ENCODE measurements at regions of chr10 and their contacts with region 1.

Region 1: GRCh38 chr10:97736902-97737769 is at the start of gene ZFYVE27:
- DNase-seq: peak; percentile 98
- H3K4me3 Mint-ChIP-seq: peak within 1 kb of the TSS; percentile 92
- H3K27ac Mint-ChIP-seq: peak within 1 kb of the TSS; percentile 93
- H3K4me1 Mint-ChIP-seq: peaks cover 44% of the 10 kb centered on the region
- H3K27me3 Mint-ChIP-seq: no peaks in the 10 kb centered on the region
- total RNA-seq, gene ZFYVE27: 18.0 to 18.4 TPM

Region 2: GRCh38 chr10:97400665-97401454 is 336.3 kb before region 1 on chr10 and contains the start of gene RRP12:
- CTCF ChIA-PET with region 1: no interaction called
- intact Hi-C with region 1: loop called (anchors 2 kb)
- DNase-seq: peak; percentile 92
- H3K4me3 Mint-ChIP-seq: peak within 1 kb of the TSS; percentile 92
- H3K27ac Mint-ChIP-seq: peak within 1 kb of the TSS; percentile 83
- H3K4me1 Mint-ChIP-seq: peaks cover 15% of the 10 kb centered on the region
- H3K27me3 Mint-ChIP-seq: no peaks in the 10 kb centered on the region
- total RNA-seq, gene RRP12: 51.0 to 55.2 TPM

Region 3: GRCh38 chr10:97632949-97633884 is 103.9 kb before region 1 on chr10 and contains the start of gene MORN4:
- CTCF ChIA-PET with region 1: no interaction called
- intact Hi-C with region 1: loop called (anchors 2 kb)
- DNase-seq: peak; percentile 95
- H3K4me3 Mint-ChIP-seq: peak within 1 kb of the TSS; percentile 99
- H3K27ac Mint-ChIP-seq: peak within 1 kb of the TSS; percentile 80
- H3K4me1 Mint-ChIP-seq: peaks cover 14% of the 10 kb centered on the region
- H3K27me3 Mint-ChIP-seq: no peaks in the 10 kb centered on the region
- total RNA-seq, gene MORN4: 10.7 TPM

Region 4: DNA sequence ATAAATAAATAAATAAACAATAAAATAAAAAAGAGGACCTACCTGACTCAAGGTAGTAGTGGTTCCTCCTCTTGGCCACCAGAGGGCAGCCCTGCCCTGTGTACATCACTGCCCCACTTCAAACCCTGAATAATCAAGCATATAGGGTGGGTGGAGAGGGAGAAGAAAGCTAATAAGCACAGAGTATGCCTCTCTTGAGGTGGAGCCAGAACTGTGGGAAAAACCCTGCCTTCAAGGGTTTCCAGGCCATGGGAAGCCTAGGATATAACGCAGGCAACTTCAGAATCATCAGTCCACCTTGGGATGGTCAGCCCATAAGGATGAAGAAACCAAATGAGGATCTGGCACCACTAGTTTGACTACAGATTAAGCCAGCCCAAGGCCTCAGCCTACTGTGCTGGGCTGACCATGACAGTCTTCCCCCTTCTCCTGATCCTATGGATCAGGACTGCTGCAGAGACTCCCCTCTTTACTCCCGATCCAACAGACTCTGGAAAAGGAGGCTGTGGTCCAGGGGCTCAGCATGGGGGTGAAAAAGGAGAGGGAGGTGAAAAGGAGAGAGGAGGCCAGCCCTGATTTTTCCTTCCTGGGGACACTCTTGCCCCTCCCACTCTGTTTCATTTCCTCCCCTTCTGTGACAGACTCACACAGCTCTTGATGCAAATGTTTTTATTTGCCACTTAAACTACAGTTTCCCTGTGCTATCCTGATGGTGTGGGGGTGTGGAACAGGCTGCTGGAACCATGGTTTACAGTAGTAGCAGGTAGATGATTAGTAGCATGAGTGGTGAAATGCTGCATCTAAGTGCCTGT is 60.2 kb before region 1 on chr10:
- CTCF ChIA-PET with region 1: interaction called, 36 read pairs
- intact Hi-C with region 1: no loop called
- DNase-seq: peak; percentile 48
- H3K4me3 Mint-ChIP-seq: no peak overlapping the region
- H3K27ac Mint-ChIP-seq: no peak overlapping the region
- H3K4me1 Mint-ChIP-seq: no peaks in the 10 kb centered on the region
- H3K27me3 Mint-ChIP-seq: no peaks in the 10 kb centered on the region

Region 5: DNA sequence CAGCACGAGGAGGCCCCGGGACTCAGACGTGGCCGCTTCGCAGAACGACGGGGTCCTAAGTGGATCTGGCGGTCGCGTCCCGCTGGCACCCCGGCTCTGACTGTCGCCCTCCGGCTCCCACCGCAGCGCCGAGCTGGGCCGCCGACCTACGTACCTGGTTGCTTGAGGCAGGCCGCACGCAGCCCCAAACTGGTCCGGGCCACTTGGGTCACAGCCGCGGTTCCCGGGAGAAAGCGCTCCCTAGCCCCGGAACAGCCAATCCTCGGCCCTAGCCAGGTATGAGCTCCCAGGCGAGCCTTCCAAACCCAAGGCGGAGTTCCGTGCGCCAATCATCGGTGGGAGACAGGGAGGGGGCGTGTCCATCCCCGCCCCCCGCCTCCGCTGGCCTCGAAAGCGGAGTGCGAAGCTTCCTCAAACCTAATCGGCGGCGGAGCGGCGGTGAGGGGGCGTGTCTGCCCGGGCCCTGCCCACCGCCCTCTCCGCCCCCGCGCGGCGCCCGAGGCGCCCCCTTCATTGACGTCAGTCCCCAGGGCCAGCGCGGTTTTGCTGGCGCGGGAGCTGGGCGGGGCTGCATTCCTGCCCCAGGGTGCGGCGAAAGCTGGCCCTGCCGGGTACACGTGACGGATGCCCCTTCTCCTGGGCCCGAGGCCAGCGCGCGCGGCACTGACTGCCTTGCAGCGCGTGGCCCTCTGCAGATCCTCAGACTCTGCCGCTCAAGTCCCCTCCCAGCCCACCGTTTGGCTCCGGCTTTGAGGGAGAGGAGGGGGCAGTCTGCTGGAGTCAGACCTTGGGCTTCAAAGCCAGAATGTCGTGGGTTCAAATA is 50.0 kb before region 1 on chr10 and contains the start of gene AVPI1:
- CTCF ChIA-PET with region 1: interaction called, 32 read pairs
- intact Hi-C with region 1: loop called (anchors 1 kb)
- DNase-seq: peak; percentile 96
- H3K4me3 Mint-ChIP-seq: peak within 1 kb of the TSS; percentile 81
- H3K27ac Mint-ChIP-seq: no peak within 1 kb of the TSS
- H3K4me1 Mint-ChIP-seq: peaks cover 12% of the 10 kb centered on the region
- H3K27me3 Mint-ChIP-seq: no peaks in the 10 kb centered on the region
- total RNA-seq, gene AVPI1: 1.5 to 1.9 TPM